HEK293 (cell line): ENCODE measurements at regions of chr3 and their contacts with region 1.

Region 1: DNA sequence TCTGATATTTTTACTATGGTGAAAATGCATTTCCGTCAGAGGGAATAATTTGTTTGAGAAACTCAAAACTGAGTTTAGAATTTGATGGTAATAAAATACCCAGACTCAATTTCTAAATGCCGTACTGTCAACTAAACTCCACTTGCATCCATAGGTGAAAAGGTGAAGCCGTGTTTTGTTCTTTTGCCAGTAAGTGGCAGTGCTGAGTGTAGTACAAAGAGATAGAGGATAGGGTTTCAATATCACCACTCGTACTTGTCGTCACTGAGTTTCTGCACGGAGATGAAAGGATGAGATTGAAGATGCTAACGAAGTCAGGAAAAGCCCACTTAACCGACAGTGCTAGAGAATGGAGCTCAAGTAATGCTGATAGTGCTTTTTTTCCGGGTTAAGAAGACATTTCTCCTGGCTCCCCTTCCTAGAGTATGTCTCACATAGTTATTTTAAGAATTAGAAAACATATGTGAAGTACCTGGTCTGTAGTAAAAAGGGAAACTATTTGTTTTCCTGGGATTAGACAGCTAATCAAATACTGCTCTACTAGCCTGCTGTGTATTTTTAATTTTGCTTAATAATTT is 345.1 kb downstream of the IL5RA start:
- H3K4me3 ChIP-seq: no peak overlapping the region
- H3K27ac ChIP-seq: no peak overlapping the region
- H3K4me1 ChIP-seq: no peaks in the 10 kb centered on the region
- CTCF ChIP-seq: no peak

Region 2: DNA sequence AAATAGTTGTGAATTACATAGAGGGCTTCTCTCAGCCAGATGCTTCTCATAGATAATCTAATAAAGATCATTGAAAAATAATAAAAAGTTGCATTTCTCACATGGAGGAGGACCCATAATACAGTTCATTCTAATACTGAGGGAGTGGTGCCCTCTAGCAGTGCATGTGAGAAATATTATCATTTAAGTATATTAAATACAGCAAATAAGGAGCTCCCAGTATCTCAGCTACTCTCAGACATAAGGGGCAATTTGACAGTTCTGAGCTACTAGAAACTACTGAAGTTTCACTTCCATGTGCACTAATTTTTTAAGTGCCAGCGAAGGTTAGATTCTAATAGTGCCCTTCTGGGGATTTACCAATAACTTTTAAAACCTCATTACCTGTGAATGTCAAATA is 156.8 kb after region 1 on chr3:
- CTCF ChIA-PET with region 1: interaction called, 29 read pairs
- POLR2A ChIA-PET with region 1: no interaction called
- H3K4me3 ChIP-seq: no peak overlapping the region
- H3K27ac ChIP-seq: no peak overlapping the region
- H3K4me1 ChIP-seq: no peaks in the 10 kb centered on the region
- CTCF ChIP-seq: no peak

Region 3: GRCh38 chr3:3015185-3016089 is 250.3 kb after region 1 on chr3:
- CTCF ChIA-PET with region 1: interaction called, 12 read pairs
- POLR2A ChIA-PET with region 1: no interaction called
- H3K4me3 ChIP-seq: no peak overlapping the region
- H3K27ac ChIP-seq: no peak overlapping the region
- H3K4me1 ChIP-seq: no peaks in the 10 kb centered on the region
- CTCF ChIP-seq: peak; percentile 46; the same call in 1 of the 2 replicates